Dorsolateral prefrontal cortex (tissue), 120 donors: ENCODE measurements at regions of chr1 and their contacts with region 1.

Region 1: DNA sequence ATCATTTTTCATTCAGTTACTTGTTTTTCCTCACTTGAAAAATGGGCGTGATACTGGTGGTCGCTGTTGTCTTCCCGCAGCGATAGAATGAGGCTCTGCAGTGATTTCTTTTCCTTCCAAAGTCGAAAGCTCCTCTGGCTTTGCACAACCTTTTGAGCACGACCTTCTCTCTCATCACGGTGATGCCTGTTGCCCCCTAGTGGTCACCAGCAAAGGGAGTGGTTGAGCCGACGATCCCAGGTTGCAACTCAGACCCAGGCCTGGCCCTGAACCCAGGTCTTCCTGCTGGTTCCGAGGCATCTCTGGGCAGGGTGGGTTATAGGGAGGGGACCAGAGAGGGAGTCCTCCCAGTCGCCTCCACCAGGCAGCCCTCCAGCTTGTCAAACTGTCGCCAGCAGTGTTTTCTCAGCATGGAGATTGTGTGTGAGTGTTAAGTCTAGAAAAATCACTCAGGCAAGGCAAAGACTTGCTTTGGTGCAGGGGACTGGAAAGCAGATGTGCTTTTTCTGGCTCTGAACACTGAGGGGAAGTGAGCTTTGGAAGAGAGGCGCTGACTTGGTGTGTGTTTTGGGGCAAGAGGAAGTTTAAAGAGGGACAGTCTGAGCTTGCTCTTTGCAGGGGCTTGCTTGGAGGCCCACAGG is 285.3 kb downstream of the CAMTA1 start:
- DNase-seq: peak in 7 of 10 donors; percentile 48 to 69 (median 58)
- H3K4me3 ChIP-seq: peak overlapping the region in 58 of 59 donors; percentile 15 to 66 (median 40)
- H3K27ac ChIP-seq: peak overlapping the region in 3 of 59 donors; percentile 6 to 53 (median 46)
- H3K27me3 ChIP-seq: no peaks in the 10 kb centered on the region
- CTCF ChIP-seq: peak; percentile 62 to 88 (median 80)

Region 2: GRCh38 chr1:6727535-6727934 is 343.0 kb before region 1 on chr1:
- intact Hi-C with region 1: loop called in 1 of 2 experiments (anchors 10 kb)
- DNase-seq: peak in 1 of 10 donors; percentile 19
- H3K4me3 ChIP-seq: no peak overlapping the region
- H3K27ac ChIP-seq: no peak overlapping the region
- H3K27me3 ChIP-seq: no peaks in the 10 kb centered on the region
- CTCF ChIP-seq: peak; percentile 49 to 88 (median 74)

Region 3: GRCh38 chr1:6794164-6794563 is 276.3 kb before region 1 on chr1:
- intact Hi-C with region 1: loop called (anchors 2 to 10 kb)
- DNase-seq: no peak
- H3K4me3 ChIP-seq: no peak overlapping the region
- H3K27ac ChIP-seq: no peak overlapping the region
- H3K27me3 ChIP-seq: no peaks in the 10 kb centered on the region
- CTCF ChIP-seq: peak in 55 of 56 donors; percentile 47 to 83 (median 65)

Region 4: GRCh38 chr1:6889875-6890480 is 180.5 kb before region 1 on chr1:
- intact Hi-C with region 1: loop called in 1 of 2 experiments (anchors 10 kb)
- DNase-seq: peak in 2 of 10 donors; percentile 40 to 54
- H3K4me3 ChIP-seq: no peak overlapping the region
- H3K27ac ChIP-seq: no peak overlapping the region
- H3K27me3 ChIP-seq: no peaks in the 10 kb centered on the region
- CTCF ChIP-seq: peak; percentile 51 to 89 (median 75)

Region 5: GRCh38 chr1:7218210-7218832 is 147.8 kb after region 1 on chr1:
- intact Hi-C with region 1: loop called in 1 of 2 experiments (anchors 10 kb)
- DNase-seq: peak in 1 of 10 donors; percentile 53
- H3K4me3 ChIP-seq: no peak overlapping the region
- H3K27ac ChIP-seq: no peak overlapping the region
- H3K27me3 ChIP-seq: no peaks in the 10 kb centered on the region
- CTCF ChIP-seq: peak; percentile 46 to 82 (median 72)